ENCODE measurements at regions of chr15 and their contacts with region 1.

Region 1: GRCh38 chr15:72599855-72600464 is 54.5 kb upstream of the GOLGA6B start:
- DNase-seq: peak in 1 of 2 donors; percentile 32
- ATAC-seq: no peak
- H3K4me3 ChIP-seq: no peak overlapping the region
- H3K27ac ChIP-seq: no peak overlapping the region
- H3K4me1 ChIP-seq: no peaks in the 10 kb centered on the region
- H3K27me3 ChIP-seq: no peaks in the 10 kb centered on the region
- CTCF ChIP-seq: peak; percentile 43 to 75 (median 67)

Region 2: DNA sequence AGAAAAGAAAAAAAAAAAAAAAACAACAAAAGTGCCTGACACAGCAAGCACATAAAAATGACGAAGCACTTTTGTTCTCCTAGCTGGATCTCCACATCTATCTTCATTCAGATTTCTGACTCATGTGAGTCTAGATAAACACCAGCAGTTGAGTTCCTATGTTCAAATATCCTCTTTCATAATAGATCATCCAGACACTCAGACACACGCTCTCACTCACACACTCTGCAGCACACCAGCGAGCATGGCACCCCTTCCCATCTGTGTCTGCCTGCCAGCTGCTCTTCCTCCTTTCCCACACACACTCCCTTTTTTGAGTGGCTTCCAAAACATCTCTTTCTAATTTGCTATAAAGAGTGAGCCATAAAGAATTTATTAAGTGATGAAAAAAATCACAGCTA is 260.2 kb before region 1 on chr15:
- intact Hi-C with region 1: loop called in 1 of 10 experiments (anchors 10 kb)
- DNase-seq: no peak
- ATAC-seq: peak in 1 of 8 donors; percentile 39
- H3K4me3 ChIP-seq: no peak overlapping the region
- H3K27ac ChIP-seq: peak overlapping the region in 1 of 10 donors; percentile 73
- H3K4me1 ChIP-seq: peaks cover 0 to 20% (median 0%) of the 10 kb centered on the region in 9 donors
- H3K27me3 ChIP-seq: no peaks in the 10 kb centered on the region
- CTCF ChIP-seq: no peak

Region 3: DNA sequence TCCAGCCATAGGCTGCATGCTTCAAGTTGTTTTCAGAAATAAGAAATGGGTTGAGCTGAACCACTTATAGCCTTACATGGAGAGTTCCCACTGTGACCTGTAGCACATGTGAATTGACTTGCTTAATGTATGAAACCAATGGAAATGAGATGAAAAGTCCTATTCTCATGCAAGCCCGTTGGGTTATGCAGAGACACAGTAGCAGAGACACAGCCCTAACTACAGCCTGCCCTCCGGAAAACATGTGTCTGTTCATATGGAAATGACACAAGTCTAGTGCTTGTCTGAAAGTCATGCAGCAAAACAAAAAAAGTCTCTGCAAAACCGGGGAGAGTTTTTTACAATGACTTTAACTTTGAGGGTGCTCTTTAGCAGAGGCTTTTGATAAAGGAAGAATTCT is 71.6 kb after region 1 on chr15:
- intact Hi-C with region 1: loop called in 6 of 10 experiments (anchors 10 kb)
- DNase-seq: no peak
- ATAC-seq: no peak
- H3K4me3 ChIP-seq: no peak overlapping the region
- H3K27ac ChIP-seq: no peak overlapping the region
- H3K4me1 ChIP-seq: peaks cover 0 to 5% (median 0%) of the 10 kb centered on the region in 9 donors
- H3K27me3 ChIP-seq: peaks cover 0 to 40% (median 30%) of the 10 kb centered on the region in 7 donors
- CTCF ChIP-seq: no peak

Region 4: DNA sequence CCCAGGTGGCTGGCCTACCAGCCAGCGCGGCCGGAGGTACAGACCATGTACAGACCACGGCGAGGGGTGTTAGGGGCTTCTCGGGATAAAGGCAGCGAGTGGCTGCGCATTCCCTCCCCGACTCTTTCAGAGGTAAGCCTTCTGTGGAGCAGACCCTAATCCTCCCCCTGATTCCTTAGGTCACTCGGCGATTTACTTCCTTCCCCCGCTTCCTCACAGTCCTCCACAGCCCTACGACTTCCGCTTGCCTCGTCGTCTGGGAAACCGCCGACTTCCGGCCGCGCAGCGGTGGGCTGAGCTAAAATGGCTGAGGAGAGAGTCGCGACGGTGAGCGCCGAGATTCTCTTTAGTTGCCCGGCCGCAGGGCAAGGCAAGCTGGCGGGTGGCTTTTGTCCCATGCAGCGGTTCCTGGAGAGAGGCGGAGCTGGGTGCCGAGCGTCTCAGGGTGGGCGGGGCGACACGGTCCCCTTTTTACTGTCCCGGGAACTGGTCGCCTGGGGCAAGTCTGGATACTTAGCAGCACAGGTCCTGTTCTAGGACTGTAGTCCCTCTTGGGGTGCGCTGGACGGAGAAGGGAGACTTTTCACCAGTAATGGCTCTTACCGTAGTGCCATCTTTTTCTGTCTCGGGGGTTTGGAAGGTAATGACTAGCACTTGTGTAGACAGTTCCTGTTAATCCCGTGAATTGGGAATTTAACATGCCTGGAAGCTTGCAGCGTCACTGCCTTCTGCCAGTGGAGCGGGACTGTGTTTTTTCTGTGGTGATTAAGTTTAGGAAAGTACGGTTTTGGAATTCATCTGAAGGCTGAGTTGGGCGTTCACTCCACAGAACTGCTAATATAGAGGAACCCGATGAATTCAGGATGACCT is 86.2 kb after region 1 on chr15 and contains the starts of genes BBS4 and HIGD2B:
- intact Hi-C with region 1: loop called in 1 of 10 experiments (anchors 5 kb)
- DNase-seq: peak; percentile 87 to 88
- ATAC-seq: peak; percentile 98 to 99 (median 99)
- H3K4me3 ChIP-seq: peak within 1 kb of the TSS; percentile 57 to 92 (median 73)
- H3K27ac ChIP-seq: peak within 1 kb of the TSS; percentile 75 to 96 (median 88)
- H3K4me1 ChIP-seq: peaks cover 0 to 18% (median 7%) of the 10 kb centered on the region in 9 donors
- H3K27me3 ChIP-seq: no peaks in the 10 kb centered on the region
- CTCF ChIP-seq: no peak
- total RNA-seq, gene BBS4: 6.8 to 18.0 (median 12.7) TPM
- total RNA-seq, gene HIGD2B: not detected